ENCODE measurements at regions of chr12 and their contacts with region 1.

Region 1: DNA sequence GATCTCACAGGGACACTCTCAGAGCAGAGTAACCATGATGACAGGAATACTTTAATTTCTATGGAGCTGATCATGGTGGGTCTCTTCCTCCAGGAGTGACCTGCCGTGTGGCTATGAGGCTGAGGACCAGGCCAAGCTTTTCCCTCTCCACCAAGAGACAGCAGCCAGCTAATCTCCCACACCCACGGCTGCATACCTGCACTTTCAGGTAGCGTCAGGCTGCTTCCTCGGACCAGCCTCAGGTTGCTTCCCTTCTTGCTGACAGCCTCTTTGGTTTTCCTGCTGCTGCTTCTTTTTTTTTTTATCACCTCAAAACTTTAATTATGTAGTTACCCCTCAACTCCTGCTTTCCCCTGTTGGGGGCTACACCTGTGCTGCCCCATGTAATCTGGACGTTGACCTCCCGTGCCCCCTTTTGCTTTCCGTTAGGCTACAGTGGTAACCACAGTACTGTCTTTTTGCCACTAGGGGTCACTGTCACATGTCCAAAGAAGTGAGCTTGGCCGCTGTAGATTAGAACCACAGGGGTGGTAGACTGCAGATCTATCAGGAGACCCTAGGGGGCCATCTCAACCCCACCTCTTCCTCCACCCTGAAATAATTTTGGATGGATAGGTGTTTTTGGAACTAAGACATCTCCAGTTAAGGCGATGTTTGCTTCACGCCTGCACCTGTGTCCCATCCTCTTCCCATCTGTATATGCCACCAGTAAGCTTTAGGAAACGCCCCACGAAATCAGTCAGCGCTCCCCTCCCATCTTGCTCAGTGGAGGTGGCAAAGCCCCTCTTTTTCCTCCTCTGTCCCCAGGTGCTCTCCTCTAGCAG is 7.8 kb upstream of the PIP4K2C start:
- DNase-seq: peak; percentile 82
- H3K4me3 Mint-ChIP-seq: no peak overlapping the region
- H3K27ac Mint-ChIP-seq: no peak overlapping the region
- H3K4me1 Mint-ChIP-seq: no peaks in the 10 kb centered on the region
- H3K27me3 Mint-ChIP-seq: peaks cover 3% of the 10 kb centered on the region

Region 2: GRCh38 chr12:57568838-57569237 is 14.4 kb before region 1 on chr12:
- CTCF ChIA-PET with region 1: interaction called, 24 read pairs
- intact Hi-C with region 1: no loop called
- DNase-seq: no peak
- H3K4me3 Mint-ChIP-seq: no peak overlapping the region
- H3K27ac Mint-ChIP-seq: no peak overlapping the region
- H3K4me1 Mint-ChIP-seq: no peaks in the 10 kb centered on the region
- H3K27me3 Mint-ChIP-seq: no peaks in the 10 kb centered on the region

Region 3: GRCh38 chr12:57611108-57611809 is 28.0 kb after region 1 on chr12 and contains the start of gene ARHGEF25:
- CTCF ChIA-PET with region 1: interaction called, 15 read pairs
- intact Hi-C with region 1: no loop called
- DNase-seq: peak; percentile 58
- H3K4me3 Mint-ChIP-seq: peak within 1 kb of the TSS; percentile 65
- H3K27ac Mint-ChIP-seq: no peak within 1 kb of the TSS
- H3K4me1 Mint-ChIP-seq: peaks cover 9% of the 10 kb centered on the region
- H3K27me3 Mint-ChIP-seq: peaks cover 19% of the 10 kb centered on the region
- total RNA-seq, gene ARHGEF25: 1.4 to 1.5 TPM

Region 4: DNA sequence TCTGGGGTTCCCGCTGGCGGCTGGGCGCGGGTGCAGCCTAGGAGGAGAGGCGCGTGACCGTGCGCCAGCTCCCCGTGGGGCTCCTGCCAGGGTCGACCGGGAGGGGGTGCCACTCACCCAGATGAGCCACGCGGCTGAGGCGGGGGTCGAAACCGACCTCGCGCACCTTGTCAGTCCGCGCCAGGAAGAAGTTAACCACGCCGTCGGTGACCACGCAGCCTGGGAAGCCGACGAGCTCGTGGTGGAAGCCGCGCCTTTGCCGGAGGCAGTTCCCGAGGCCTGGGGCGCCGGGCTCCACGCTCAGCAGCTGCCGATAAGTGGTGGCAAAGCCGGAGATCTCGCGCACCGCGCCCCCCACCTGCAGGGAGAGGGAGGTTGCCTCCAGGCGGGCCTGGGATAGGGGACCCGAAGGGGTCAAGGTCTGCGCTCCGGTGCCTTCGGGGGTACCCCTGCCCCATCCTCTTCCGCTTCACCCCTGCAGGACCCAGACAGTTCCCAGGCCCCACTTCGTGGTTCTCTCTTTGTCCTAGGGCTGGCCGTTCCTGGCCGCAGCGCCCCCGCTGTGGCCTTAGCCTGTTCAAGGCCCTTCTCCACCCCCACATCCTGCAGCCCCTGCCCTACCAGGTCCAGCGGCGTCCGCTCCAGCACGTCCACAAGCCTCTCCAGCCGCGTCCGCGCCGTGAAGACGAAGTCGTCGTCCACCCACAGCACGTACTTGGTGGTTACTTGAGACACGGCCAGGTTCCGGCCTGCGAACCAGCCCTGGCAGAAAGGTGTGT is 44.5 kb after region 1 on chr12:
- CTCF ChIA-PET with region 1: interaction called, 101 read pairs
- intact Hi-C with region 1: no loop called
- DNase-seq: peak; percentile 59
- H3K4me3 Mint-ChIP-seq: peak overlapping the region; percentile 15
- H3K27ac Mint-ChIP-seq: no peak overlapping the region
- H3K4me1 Mint-ChIP-seq: peaks cover 7% of the 10 kb centered on the region
- H3K27me3 Mint-ChIP-seq: peaks cover 79% of the 10 kb centered on the region

Region 5: GRCh38 chr12:57693659-57694458 is 110.6 kb after region 1 on chr12 and contains the start of gene OS9:
- CTCF ChIA-PET with region 1: interaction called, 22 read pairs
- intact Hi-C with region 1: loop called (anchors 1 kb)
- DNase-seq: peak; percentile 99
- H3K4me3 Mint-ChIP-seq: no peak within 1 kb of the TSS
- H3K27ac Mint-ChIP-seq: no peak within 1 kb of the TSS
- H3K4me1 Mint-ChIP-seq: peaks cover 3% of the 10 kb centered on the region
- H3K27me3 Mint-ChIP-seq: no peaks in the 10 kb centered on the region
- total RNA-seq, gene OS9: 60.7 to 60.9 TPM

Region 6: DNA sequence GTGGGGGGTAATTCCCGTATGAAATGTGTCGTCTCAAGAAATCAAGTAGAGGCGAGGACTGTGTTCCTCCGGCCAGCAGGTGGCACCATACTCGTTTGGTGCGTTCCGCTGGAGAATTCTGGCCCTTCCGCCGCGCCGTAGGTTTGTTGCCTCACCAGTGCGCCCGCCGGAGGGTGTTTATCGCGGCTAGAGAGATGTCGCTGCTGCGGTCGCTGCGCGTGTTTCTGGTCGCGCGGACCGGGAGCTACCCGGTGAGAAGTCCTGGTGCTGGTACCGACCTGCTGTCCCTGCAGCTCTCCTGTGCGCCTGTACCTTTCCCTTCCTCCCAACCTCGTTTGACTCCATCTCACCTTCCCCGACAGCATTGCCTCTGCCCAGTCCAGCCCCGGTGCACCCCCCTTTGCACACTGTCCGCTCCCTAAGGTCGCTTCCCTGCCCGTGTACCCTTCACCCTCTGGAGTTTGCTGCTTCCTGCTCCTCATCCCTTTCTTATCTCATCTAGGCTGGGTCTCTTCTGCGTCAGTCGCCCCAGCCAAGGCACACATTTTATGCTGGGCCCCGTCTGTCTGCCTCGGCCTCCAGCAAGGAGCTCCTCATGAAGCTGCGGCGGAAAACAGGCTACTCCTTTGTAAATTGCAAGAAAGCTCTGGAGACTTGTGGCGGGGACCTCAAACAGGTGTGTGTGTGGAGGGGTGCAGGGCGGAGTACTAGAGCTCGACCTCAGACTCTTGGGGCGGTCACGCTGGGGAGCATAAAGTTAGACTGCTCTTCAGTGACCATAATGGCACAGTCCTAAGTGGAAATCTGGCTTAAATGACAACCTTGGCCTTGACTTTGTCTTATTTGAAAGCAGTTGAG is 199.6 kb after region 1 on chr12 and contains the start of gene TSFM:
- CTCF ChIA-PET with region 1: no interaction called
- intact Hi-C with region 1: loop called (anchors 5 kb)
- DNase-seq: peak; percentile 99
- H3K4me3 Mint-ChIP-seq: peak within 1 kb of the TSS; percentile 100
- H3K27ac Mint-ChIP-seq: peak within 1 kb of the TSS; percentile 86
- H3K4me1 Mint-ChIP-seq: peaks cover 29% of the 10 kb centered on the region
- H3K27me3 Mint-ChIP-seq: no peaks in the 10 kb centered on the region
- total RNA-seq, gene TSFM: 32.8 to 34.3 TPM